ENCODE measurements at regions of chr9 and their contacts with region 1.

Region 1: DNA sequence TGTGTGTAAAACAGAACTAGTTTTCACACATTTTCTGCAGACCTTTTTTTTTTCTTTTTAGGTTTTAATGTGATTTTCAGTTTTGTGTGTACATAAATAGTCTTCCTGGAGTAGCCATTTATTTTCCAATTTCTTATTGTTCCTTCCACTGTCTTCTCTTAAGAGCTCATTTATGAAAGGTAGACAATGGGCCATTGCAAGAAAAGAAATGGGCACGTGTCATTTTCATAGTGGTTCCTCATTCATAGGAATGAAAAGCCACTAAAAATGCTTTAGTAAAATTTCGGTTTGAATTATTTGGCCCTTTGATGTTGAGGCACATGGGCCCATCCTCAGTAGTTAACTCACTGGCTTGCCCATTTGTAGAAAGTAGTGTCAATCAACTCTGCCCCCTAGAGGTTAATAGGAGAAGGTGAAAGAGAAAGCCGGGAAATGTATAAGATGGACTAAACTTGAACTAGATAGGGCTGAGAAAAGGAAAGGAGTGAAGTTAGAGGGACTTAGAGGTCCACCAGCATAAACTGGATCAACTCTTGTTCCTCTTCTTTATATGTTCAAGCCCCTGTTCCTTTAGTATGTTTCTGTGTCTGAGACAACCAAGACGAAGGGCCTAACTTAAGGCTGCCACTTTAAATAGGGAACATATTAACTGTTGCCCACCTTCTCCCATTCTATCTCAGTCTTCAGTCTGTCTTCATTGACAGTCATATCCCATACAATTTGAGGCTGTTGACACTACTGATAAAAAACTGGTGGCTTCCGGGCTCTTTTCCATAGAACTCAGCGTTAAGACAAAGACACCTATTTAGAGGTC is 72.6 kb downstream of the SMARCA2 start:
- DNase-seq: peak; percentile 42
- ATAC-seq: peak; percentile 87
- H3K4me3 ChIP-seq: no peak overlapping the region
- H3K27ac ChIP-seq: no peak overlapping the region
- H3K4me1 ChIP-seq: no peaks in the 10 kb centered on the region
- H3K27me3 ChIP-seq: no peaks in the 10 kb centered on the region
- CTCF ChIP-seq: peak; percentile 32 to 76 (median 73); a peak in 5 of 6 replicates
- POLR2A ChIP-seq: no peak
- RAD21 ChIP-seq: peak; percentile 48

Region 2: DNA sequence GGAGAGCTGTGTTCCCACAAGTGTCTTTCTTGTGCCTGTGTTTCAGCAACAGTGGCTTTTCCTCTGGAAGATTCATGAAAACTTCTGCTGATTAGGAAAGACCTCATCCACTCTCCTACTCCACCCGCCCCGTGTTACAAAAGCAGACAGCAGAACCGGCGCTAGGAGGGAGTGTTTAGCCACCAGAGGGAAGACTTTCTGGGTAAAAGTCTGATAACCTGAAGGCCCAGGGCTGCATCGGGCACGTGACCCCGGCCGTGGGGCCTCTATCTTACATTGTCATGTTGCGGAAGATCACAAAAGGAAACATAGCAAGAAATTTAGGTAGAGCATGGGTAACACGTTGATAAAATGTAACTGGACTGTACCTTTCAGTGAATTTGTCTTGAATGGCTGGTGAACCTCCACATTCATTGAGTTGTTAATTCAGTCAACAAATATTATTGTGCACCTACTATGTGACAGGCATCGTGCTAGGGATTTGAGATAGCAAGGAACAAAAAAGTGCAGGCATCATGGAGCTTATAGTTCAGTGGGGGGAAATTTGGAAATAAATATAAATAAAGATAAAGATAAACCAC is 1069.5 kb before region 1 on chr9:
- CTCF ChIA-PET with region 1: no interaction called
- POLR2A ChIA-PET with region 1: no interaction called
- RAD21 ChIA-PET with region 1: no interaction called
- intact Hi-C with region 1: loop called (anchors 1 kb)
- DNase-seq: peak; percentile 13
- ATAC-seq: peak; percentile 78
- H3K4me3 ChIP-seq: no peak overlapping the region
- H3K27ac ChIP-seq: no peak overlapping the region
- H3K4me1 ChIP-seq: no peaks in the 10 kb centered on the region
- H3K27me3 ChIP-seq: no peaks in the 10 kb centered on the region
- CTCF ChIP-seq: peak; percentile 21 to 46 (median 36); a peak in 4 of 6 replicates
- POLR2A ChIP-seq: no peak
- RAD21 ChIP-seq: peak; percentile 53

Region 3: GRCh38 chr9:3385871-3386270 is 1298.2 kb after region 1 on chr9:
- CTCF ChIA-PET with region 1: no interaction called
- POLR2A ChIA-PET with region 1: no interaction called
- RAD21 ChIA-PET with region 1: no interaction called
- intact Hi-C with region 1: no loop called
- DNase-seq: no peak
- ATAC-seq: no peak
- H3K4me3 ChIP-seq: no peak overlapping the region
- H3K27ac ChIP-seq: no peak overlapping the region
- H3K4me1 ChIP-seq: no peaks in the 10 kb centered on the region
- H3K27me3 ChIP-seq: no peaks in the 10 kb centered on the region
- CTCF ChIP-seq: no peak
- POLR2A ChIP-seq: no peak
- RAD21 ChIP-seq: no peak

Measured in HCT116 (cell line).